Right ventricle myocardium inferior (tissue), 1 donor: ENCODE measurements at regions of chr19 and their contacts with region 1.

Region 1: GRCh38 chr19:47790398-47790814 is 11.9 kb downstream of the SELENOW start:
- DNase-seq: peak; percentile 89
- ATAC-seq: peak; percentile 69

Region 2: DNA sequence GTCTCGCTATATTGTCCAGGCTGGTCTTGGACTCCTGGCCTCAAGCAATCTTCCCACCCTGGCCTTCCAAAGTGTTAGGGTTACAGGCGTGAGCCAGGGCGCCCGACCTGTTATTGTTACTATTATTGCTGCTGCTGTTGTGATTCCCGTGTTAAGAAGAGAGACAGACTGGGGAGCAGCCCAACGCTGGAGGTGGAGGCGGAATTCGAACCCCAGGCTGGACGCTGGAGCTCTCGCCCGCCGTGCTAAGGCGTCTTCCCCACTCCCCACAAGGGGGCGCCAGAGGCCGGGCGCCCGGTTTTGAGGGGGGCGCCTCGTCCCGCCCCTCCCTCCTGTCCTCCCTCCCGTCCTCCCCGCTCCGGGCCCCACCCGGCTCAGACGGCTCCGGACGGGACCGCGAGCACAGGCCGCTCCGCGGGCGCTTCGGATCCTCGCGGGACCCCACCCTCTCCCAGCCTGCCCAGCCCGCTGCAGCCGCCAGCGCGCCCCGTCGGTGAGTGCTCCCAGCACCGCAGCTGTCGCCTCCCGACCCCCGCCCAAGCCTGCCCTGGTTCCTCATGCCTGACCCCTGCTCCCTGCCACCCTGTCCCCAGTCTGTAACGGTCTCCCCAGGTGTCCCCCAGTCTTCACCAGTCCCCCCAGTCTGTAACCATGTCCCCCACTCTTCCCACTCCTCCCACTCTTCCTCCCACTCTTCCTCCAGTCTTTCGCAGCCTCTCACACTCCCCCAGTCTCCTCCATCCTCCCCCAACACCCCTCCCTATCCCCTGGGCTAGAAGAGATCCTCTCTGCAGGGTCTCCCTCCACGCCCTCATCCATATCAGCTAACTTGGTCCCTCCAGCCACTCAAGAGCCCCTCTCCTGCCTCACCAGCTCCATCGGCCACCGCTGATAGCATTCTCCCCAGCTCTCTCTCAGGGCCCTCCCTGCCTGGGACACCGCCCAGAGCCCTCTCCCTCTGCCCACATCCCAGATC is 77.1 kb before region 1 on chr19 and contains the start of gene EHD2:
- intact Hi-C with region 1: loop called (anchors 2 kb)
- DNase-seq: peak; percentile 80
- ATAC-seq: peak; percentile 95
- total RNA-seq, gene EHD2: 60.5 TPM

Region 3: DNA sequence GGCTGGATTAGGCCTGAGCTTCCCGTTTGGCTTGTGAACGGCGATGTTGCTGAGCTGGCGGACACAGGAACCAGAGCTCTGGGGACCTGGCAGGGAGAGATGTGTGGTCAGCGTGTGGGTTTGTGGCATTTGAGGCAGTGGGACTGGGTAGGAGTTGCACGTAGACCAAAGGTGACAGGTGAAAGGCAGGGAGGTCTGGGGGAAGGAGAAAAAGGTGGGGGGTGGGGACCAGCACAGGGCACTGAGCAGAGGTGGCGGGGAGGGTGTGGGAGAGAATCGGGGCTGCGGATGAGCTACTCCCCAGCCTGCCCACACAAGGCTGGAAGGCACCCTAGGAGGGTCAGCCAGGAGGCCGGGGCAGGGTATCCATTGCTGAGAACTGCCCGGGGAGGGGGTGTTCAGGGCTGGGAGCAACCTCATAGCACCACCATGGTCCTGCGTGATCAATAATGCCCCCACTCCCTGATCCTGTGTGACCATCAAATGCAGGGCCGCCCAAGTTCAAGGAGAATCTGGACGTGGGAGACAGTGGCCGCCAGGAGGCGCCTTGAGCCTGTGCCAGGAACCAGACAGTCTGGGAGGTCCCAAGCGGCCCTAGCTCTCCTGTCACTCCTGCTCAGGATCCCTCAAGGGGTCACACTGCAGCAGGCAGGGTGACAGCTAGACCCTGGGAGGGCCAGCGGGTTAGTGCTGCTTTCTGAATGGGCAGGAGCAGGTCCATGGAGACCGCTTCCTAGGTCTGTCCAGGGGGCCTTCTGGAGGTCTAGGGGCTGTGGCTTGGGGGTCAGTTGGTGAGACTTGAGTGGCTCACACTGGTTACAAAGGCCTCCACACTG is 24.7 kb before region 1 on chr19:
- intact Hi-C with region 1: loop called (anchors 1 kb)
- DNase-seq: peak; percentile 66
- ATAC-seq: peak; percentile 75